ENCODE measurements at regions of chr1 and their contacts with region 1.

Region 1: DNA sequence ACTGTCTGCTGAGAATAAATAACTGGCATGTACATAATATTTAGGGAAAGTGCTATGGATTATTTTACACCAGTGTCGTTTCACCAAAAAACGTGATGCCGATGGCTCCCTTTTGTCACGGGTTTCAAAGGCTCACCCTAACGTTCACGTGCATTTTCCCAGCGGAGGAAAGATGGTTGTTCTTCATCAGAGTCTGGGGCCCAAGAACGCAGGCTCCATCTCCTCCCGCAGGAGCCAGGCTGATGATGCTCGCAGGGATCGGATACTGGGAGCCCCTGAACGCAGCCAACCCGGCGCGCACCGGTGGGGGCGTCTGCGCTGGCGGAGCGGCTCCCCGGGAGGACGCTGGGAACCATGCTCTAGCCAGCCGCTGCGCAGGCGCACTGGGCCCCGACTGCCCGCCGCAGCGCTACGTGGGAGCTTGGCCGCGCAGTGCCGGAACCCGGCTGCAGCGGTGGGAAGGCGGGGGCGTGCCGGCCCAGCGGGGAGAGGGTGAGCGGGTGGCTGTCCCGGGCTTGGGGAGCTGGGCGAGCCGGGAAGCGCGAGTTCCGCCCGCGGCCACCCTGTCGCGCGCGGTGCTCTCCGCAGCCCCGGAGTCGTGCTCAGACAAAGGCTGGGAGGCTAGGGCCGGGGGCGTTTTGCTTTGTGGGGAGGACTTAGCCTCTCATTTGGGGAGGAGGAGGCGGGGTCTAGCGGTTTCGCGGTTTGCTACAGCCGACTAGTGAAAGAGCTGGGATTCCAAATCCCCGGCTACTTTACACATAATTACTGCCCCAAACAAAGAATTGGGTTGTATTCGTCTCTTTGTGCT is at the start of gene ZFP69B:
- DNase-seq: peak; percentile 86
- H3K4me3 Mint-ChIP-seq: peak within 1 kb of the TSS; percentile 84
- H3K27ac Mint-ChIP-seq: peak within 1 kb of the TSS; percentile 90
- H3K4me1 Mint-ChIP-seq: peaks cover 35% of the 10 kb centered on the region
- H3K27me3 Mint-ChIP-seq: no peaks in the 10 kb centered on the region
- total RNA-seq, gene ZFP69B: 5.1 and 5.8 TPM in 2 replicates

Region 2: DNA sequence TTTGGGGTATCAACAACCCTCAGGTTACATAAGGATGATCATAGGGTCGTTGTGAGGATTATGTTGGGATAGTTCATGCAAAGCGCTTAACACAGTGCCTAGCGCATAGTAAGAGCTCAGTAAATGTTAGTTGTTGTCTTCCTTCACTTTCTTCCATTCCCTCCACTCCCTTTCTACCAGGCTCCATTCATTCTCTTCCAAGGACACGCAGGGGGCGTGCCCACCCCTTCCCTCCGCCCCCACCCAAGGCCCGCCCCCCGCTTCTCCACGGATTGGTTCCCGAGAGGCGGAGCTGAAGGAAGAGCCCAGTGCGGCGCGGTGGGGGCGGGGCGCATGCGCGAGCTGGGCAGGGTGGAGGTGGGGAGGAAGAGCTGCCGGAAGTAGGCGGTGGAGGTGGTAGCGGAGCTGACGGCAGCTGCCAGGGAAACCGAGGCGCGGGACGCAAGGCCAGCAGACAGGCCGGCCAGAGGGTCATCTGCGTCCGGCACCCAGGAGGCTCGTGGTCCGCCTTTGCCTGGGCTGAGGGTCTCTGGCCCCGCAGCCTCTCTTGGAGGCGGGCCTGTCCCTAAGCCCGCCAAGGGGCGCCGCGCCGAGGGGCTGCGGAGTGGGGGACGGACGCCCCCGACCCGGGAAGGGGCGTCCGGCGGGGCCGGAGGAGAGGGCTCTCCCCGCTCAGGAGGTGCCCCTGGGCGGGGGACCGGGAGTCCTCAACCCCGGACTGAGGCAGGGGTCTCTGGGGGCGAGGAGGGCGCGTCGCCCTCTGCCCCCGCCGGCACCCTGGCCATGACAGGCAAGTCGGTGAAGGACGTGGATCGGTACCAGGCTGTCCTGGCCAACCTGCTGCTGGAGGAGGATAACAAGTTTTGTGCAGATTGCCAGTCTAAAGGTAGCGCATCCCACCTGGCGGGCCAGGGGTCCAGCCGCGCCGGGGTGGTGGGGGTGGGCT is 76.3 kb before region 1 on chr1 and contains the start of gene SMAP2:
- intact Hi-C with region 1: loop called (anchors 5 kb)
- DNase-seq: peak; percentile 95
- H3K4me3 Mint-ChIP-seq: peak within 1 kb of the TSS; percentile 97
- H3K27ac Mint-ChIP-seq: peak within 1 kb of the TSS; percentile 99
- H3K4me1 Mint-ChIP-seq: peaks cover 59% of the 10 kb centered on the region
- H3K27me3 Mint-ChIP-seq: peaks cover 3% of the 10 kb centered on the region
- total RNA-seq, gene SMAP2: 196 and 201 TPM in 2 replicates

Region 3: GRCh38 chr1:40476924-40477677 is 27.2 kb after region 1 on chr1 and contains the start of gene ZFP69:
- intact Hi-C with region 1: loop called (anchors 1 kb)
- DNase-seq: peak; percentile 64
- H3K4me3 Mint-ChIP-seq: peak within 1 kb of the TSS; percentile 85
- H3K27ac Mint-ChIP-seq: peak within 1 kb of the TSS; percentile 71
- H3K4me1 Mint-ChIP-seq: peaks cover 20% of the 10 kb centered on the region
- H3K27me3 Mint-ChIP-seq: peaks cover 2% of the 10 kb centered on the region
- total RNA-seq, gene ZFP69: 3.9 and 4.0 TPM in 2 replicates

Region 4: GRCh38 chr1:40508375-40509341 is 58.8 kb after region 1 on chr1 and contains the start of gene EXO5:
- intact Hi-C with region 1: loop called (anchors 1 kb)
- DNase-seq: peak; percentile 84
- H3K4me3 Mint-ChIP-seq: peak within 1 kb of the TSS; percentile 82
- H3K27ac Mint-ChIP-seq: peak within 1 kb of the TSS; percentile 76
- H3K4me1 Mint-ChIP-seq: peaks cover 13% of the 10 kb centered on the region
- H3K27me3 Mint-ChIP-seq: no peaks in the 10 kb centered on the region
- total RNA-seq, gene EXO5: 18.2 and 18.3 TPM in 2 replicates

Region 5: DNA sequence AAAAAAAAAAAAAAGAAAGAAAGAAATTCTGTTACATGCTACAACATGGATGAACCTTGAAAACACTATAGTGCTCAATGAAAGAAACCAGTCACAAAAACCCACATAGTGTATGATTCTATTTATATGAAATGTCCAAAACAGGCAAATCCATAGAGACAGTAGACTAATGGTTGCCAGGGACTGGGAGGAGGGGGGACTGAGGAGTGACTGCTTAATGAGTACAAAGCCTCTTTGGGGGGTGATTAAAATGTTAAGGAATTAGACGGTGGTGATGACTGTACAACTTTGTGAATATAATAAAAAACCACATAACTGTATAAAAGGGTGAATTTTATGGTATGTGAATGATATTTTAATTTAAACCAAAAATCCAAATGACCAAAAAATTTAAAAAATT is 1587.3 kb after region 1 on chr1:
- intact Hi-C with region 1: no loop called
- DNase-seq: no peak
- H3K4me3 Mint-ChIP-seq: no peak overlapping the region
- H3K27ac Mint-ChIP-seq: no peak overlapping the region
- H3K4me1 Mint-ChIP-seq: peaks cover 28% of the 10 kb centered on the region
- H3K27me3 Mint-ChIP-seq: peaks cover 14% of the 10 kb centered on the region

Measured in activated T-helper 1 cell treated with anti-CD3 and anti-CD28 coated beads, Interleukin-12 subunit alpha, Interleukin-12 subunit beta, Interleukin-2, Interleukin-4 antibody, amounts not matched to agents 30 ng/mL and 10 ng/mL and 1 ng/mL, durations not matched to agents 14 hours and 24 hours and 36 hours (primary cell).